ENCODE measurements at regions of chr12 and their contacts with region 1.

Region 1: DNA sequence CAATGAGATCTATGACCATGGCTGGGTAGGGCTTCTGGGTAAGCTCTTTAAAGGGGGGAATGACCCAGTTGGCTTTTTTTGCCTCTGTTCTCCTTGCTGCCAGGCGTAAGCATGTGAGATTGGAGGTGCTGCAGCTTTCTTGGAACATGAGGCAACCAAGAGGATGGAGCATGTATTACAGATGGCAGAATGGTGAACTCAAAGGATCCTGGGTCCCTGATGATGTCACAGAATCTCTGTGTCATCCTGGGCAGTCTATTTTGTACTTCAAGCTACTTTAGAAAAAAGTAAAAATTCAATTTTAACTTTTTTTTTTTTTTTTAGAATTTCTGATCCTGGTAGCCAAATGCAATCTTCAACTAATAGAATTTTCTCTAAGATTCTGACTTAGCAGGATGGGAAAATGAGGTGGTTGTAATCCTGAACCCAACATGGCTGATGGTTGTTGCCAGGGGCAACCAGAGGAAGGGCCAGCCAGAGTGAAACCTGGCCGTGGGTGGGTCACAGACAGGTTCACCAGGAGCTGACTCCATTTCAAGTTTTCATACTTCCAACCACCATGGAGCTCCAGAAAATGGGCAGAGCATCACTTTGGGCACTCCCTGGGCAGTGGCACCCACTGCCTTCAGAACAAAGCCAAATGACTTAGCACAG is 7.8 kb downstream of the KRT82 start:
- DNase-seq: no peak
- H3K4me3 ChIP-seq: no peak overlapping the region
- H3K27ac ChIP-seq: no peak overlapping the region
- H3K4me1 ChIP-seq: peaks cover 9% of the 10 kb centered on the region
- H3K27me3 ChIP-seq: no peaks in the 10 kb centered on the region
- CTCF ChIP-seq: no peak

Region 2: DNA sequence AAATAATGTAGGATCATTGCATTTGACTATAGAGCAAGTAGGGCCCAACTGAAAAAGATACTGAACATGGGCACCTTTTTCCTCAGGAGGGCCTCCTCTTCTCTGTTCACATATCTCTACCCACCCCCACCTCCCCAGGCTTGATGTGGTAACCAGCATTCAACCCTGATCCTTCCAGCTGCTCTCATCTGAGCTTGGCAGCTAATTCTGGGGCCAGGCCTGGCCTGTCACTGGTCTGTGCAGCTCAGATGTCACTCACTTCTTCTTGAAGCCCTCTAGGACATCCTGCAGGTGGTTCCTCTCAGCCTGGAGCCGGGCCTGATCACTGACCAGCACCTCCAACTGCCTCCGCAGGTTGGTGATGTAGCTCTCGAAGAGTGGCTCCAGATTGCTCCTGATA is 15.0 kb before region 1 on chr12:
- CTCF ChIA-PET with region 1: interaction called, 14 read pairs
- POLR2A ChIA-PET with region 1: no interaction called
- intact Hi-C with region 1: no loop called
- DNase-seq: no peak
- H3K4me3 ChIP-seq: no peak overlapping the region
- H3K27ac ChIP-seq: no peak overlapping the region
- H3K4me1 ChIP-seq: no peaks in the 10 kb centered on the region
- H3K27me3 ChIP-seq: no peaks in the 10 kb centered on the region
- CTCF ChIP-seq: no peak